H1 (cell line): ENCODE measurements at regions of chr2 and their contacts with region 1.

Region 1: GRCh38 chr2:66013465-66013864 is 421.5 kb upstream of the MEIS1 start:
- DNase-seq: no peak
- H3K4me3 ChIP-seq: no peak overlapping the region
- H3K27ac ChIP-seq: no peak overlapping the region
- H3K4me1 ChIP-seq: no peaks in the 10 kb centered on the region
- H3K27me3 ChIP-seq: no peaks in the 10 kb centered on the region
- CTCF ChIP-seq: peak in 1 of 3 experiments; percentile 17; a peak in 1 of 4 replicates
- EP300 ChIP-seq: no peak
- POLR2A ChIP-seq: no peak
- RAD21 ChIP-seq: peak; percentile 24 to 26; a peak in 2 of 4 replicates

Region 2: DNA sequence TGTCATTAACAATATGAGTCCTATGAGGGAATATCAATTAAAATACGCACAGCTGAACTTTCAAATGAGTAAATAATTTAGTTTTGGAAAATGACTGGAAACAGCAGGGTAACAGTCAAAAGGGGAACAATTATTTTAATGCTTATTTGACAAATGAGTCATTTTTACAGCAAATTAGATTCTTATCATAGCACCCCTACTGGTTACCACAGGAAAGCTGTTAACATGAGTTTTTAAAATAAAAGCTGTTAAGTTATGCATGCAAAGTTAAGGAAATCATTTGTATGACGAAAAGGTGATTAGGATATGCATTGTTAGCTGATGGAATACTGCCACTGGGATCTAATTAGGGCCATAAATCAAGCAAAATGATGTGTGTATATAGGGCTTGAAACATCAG is 13.7 kb before region 1 on chr2:
- CTCF ChIA-PET with region 1: interaction called, 22 read pairs
- POLR2A ChIA-PET with region 1: no interaction called
- DNase-seq: no peak
- H3K4me3 ChIP-seq: no peak overlapping the region
- H3K27ac ChIP-seq: no peak overlapping the region
- H3K4me1 ChIP-seq: no peaks in the 10 kb centered on the region
- H3K27me3 ChIP-seq: no peaks in the 10 kb centered on the region
- CTCF ChIP-seq: peak in 1 of 3 experiments; percentile 5; a peak in 1 of 4 replicates
- EP300 ChIP-seq: no peak
- POLR2A ChIP-seq: no peak
- RAD21 ChIP-seq: no peak